ENCODE measurements at regions of chr4 and their contacts with region 1.

Region 1: GRCh38 chr4:26330186-26330787 is 9.5 kb downstream of the RBPJ start:
- DNase-seq: no peak
- ATAC-seq: peak; percentile 61
- H3K4me3 Mint-ChIP-seq: peak overlapping the region; percentile 59
- H3K27ac Mint-ChIP-seq: peak overlapping the region; percentile 96
- H3K4me1 Mint-ChIP-seq: peaks cover 62% of the 10 kb centered on the region
- H3K27me3 Mint-ChIP-seq: no peaks in the 10 kb centered on the region
- CTCF ChIP-seq: peak; percentile 69

Region 2: GRCh38 chr4:26028793-26029567 is 301.3 kb before region 1 on chr4:
- CTCF ChIA-PET with region 1: interaction called, 12 read pairs
- POLR2A ChIA-PET with region 1: no interaction called
- DNase-seq: peak; percentile 93
- ATAC-seq: peak; percentile 69
- H3K4me3 Mint-ChIP-seq: peak overlapping the region; percentile 47
- H3K27ac Mint-ChIP-seq: peak overlapping the region; percentile 97
- H3K4me1 Mint-ChIP-seq: peaks cover 53% of the 10 kb centered on the region
- H3K27me3 Mint-ChIP-seq: no peaks in the 10 kb centered on the region; the same call in 1 of the 2 replicates
- CTCF ChIP-seq: peak; percentile 37; the same call in 1 of the 2 replicates

Region 3: GRCh38 chr4:26319467-26319948 is 10.8 kb before region 1 on chr4:
- CTCF ChIA-PET with region 1: interaction called, 14 read pairs
- POLR2A ChIA-PET with region 1: interaction called, 8 read pairs
- DNase-seq: peak; percentile 97
- ATAC-seq: peak; percentile 69
- H3K4me3 Mint-ChIP-seq: peak overlapping the region; percentile 91
- H3K27ac Mint-ChIP-seq: peak overlapping the region; percentile 99
- H3K4me1 Mint-ChIP-seq: peaks cover 28% of the 10 kb centered on the region
- H3K27me3 Mint-ChIP-seq: peaks cover 3% of the 10 kb centered on the region; the same call in 1 of the 2 replicates
- CTCF ChIP-seq: no peak

Region 4: DNA sequence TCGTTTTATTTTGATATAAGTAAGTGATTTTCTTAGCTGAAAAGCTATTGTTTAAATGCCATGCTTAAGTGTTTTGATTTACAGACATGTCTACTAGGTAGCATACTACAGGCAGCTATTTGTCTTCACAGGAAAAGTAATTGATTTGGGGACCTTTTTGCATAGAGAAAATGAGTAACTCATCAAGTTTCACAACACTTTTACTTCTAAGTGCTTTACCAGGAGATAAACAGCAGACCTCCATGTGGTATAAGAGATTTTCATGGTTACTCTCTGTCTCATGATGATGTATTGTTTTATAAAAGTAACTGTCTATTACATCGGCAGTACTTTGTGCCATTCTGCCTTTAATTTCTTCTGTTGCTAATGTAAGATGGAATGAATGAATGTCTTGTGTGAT is 19.2 kb after region 1 on chr4:
- CTCF ChIA-PET with region 1: interaction called, 32 read pairs
- POLR2A ChIA-PET with region 1: no interaction called
- DNase-seq: no peak
- ATAC-seq: no peak
- H3K4me3 Mint-ChIP-seq: no peak overlapping the region
- H3K27ac Mint-ChIP-seq: peak overlapping the region; percentile 53
- H3K4me1 Mint-ChIP-seq: peaks cover 68% of the 10 kb centered on the region
- H3K27me3 Mint-ChIP-seq: no peaks in the 10 kb centered on the region
- CTCF ChIP-seq: no peak

Region 5: DNA sequence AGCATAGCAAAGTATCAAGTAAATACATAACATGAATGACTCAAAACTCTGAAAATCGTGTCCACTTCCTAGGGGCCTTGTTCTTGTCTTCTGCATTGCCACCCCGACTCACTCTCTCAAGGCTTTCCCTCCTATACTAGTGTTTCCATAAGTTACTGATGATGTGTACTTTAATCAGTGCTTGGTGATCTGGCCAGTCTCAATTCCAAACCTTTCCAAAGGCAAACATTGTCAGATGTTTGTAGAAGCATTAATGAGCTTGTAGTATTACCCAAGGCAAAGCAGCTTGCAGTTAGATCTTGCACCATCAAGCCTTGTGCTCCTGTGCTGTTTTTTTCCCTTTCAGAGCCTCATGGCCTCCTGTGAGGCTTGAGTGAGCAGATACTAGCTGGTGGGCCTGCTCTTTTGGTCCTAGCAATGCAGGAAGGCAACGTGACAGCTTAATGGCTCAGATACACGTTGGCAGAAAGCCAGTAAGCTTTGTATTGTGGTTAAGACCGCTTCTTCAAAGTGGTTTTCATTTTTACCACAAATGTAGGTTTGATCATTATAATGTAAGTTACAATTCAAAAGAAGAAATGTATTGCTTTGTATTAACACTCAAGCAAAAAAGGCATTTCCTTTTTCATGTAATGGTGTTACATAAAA is 42.4 kb after region 1 on chr4:
- CTCF ChIA-PET with region 1: interaction called, 10 read pairs
- POLR2A ChIA-PET with region 1: no interaction called
- DNase-seq: no peak
- ATAC-seq: peak; percentile 49
- H3K4me3 Mint-ChIP-seq: no peak overlapping the region
- H3K27ac Mint-ChIP-seq: peak overlapping the region; percentile 85
- H3K4me1 Mint-ChIP-seq: peaks cover 79% of the 10 kb centered on the region
- H3K27me3 Mint-ChIP-seq: no peaks in the 10 kb centered on the region
- CTCF ChIP-seq: no peak

Region 6: DNA sequence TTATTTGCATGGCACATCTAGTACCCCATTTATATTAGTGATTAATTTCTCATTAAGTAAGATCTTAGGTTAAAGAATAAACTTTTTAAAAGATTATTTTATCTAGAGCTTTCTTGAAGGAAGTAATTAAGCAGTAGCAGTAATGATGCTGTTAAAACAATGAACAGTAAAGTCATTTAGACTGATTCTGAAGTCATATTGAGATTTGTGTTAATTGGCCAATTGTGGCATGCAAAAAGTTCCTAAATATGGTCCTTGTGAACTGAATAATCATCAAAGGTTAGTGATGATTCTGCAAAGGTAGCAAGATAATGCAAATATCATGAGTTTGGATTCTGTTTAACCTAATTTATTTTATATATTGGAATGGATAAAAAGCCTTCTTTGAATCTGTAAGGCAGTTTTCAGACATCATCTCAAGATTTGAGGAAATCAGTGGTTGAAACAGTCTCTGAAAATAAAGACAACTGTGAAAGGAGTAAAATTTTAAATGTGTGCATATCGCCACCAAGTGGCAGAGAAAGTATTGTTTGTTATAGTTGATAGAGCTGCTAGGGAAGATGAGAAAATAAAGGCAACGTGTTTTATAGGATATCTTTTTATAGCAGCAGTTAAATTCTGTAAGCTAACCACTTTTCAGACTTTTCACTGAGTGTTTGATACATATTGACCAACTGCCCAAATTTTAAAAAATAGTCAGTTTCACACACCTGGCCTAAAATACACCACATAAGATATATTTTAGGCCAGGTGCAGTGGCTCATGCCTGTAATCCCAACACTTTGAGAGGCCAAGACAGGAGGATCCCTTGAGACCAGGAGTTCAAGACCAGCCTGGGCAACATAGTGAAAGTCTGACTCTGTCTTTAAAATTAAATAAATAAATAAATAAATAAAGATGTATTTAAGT is 80.4 kb after region 1 on chr4:
- CTCF ChIA-PET with region 1: interaction called, 37 read pairs
- POLR2A ChIA-PET with region 1: no interaction called
- DNase-seq: no peak
- ATAC-seq: no peak; the same call in 1 of the 2 replicates
- H3K4me3 Mint-ChIP-seq: no peak overlapping the region
- H3K27ac Mint-ChIP-seq: no peak overlapping the region
- H3K4me1 Mint-ChIP-seq: peaks cover 51% of the 10 kb centered on the region
- H3K27me3 Mint-ChIP-seq: no peaks in the 10 kb centered on the region
- CTCF ChIP-seq: peak; percentile 57

Measured in WTC11 (cell line).